Lower leg skin (tissue), 4 donors: ENCODE measurements at regions of chr5 and their contacts with region 1.

Region 1: GRCh38 chr5:156460471-156460870 is 133.5 kb downstream of the SGCD start:
- DNase-seq: no peak
- H3K4me3 ChIP-seq: no peak overlapping the region
- CTCF ChIP-seq: no peak
- POLR2A ChIP-seq: no peak

Region 2: DNA sequence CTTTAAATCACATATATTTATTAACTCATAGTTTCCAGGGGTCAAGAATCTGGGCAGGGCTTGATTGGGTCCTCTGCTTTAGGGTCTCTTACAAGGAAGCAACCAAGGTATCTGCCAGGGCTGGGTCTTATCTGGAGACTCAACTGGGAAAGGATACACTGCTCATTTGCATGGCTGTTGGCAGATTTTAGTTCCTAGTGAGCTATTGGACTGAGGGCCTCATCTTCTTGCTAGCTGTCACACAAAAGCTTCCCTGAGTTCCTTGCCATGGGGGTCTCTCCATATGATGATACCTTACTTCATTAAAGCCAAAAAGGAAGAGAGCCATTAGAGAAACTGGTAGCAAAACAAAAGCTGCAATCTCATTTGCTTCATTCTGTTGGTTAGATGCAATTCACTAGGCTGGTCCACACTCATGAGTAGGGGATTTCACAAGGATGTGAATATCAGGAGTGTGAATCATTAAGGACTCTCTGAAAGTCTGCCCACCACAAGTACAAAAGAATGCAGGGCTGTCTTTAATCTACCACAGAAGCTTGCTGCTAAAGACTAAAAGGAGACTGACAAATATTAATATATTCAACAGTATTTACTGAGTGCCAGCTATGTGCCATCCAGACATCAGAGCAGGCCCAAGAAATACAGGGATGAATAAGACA is 544.6 kb after region 1 on chr5:
- intact Hi-C with region 1: loop called (anchors 10 kb)
- DNase-seq: no peak
- H3K4me3 ChIP-seq: no peak overlapping the region
- CTCF ChIP-seq: no peak
- POLR2A ChIP-seq: no peak